Activated B cell treated with CpG ODN at 0.5 μM for 24 hours (primary cell): ENCODE measurements at regions of chr5 and their contacts with region 1.

Region 1: DNA sequence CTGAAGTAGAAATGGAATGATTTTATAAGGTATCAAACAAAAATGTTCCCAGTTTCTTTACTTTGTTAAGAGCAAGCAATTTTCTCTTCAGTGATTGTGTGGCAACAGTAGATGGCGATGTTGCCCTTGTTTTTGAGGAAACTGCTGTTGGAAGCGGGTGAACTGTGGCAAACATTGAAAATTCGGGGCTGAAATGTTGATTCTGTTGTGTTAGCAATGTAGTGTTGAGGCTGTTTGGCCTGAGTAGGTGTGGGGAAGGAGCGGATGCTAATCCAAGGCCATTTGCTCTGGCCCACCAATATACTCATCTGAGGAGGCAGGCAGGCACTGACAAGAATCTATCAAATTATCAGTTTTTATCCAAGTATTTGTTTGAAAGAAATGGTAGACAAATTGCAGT is 129.8 kb downstream of the SLC12A2 start:
- DNase-seq: no peak
- ATAC-seq: no peak
- H3K4me3 Mint-ChIP-seq: no peak overlapping the region
- H3K27ac Mint-ChIP-seq: no peak overlapping the region
- H3K4me1 Mint-ChIP-seq: no peaks in the 10 kb centered on the region
- H3K27me3 Mint-ChIP-seq: no peaks in the 10 kb centered on the region
- CTCF ChIP-seq: no peak

Region 2: DNA sequence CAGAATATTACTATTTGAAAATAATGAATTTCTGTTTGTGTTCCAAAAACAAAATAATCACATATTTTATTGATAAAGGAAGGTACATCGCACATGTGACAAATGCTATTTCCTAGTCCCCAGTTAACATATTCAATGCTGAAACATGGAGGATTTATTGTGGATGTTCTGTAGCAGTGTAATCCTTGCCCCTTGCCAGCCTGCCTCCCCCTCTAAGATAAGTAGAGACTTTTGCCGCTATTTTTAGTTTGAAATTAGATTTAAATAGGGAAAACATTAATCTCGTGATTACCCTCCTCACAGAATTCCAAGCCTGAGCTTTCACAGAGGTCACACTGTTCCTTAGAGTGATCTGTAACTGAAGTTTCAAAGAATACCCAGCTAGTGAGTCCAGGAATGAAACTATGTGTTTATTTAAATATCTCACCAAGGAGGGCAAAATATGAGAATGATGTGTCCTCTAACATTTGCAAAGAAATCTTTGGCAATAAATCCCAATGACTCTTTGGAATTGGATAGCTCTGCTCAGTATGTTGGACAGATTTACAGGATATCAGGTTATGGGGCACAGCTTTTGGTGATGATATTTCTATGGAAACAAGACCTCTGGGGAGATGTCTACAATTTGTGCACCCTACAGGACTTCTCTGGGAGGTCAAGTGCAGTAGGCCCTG is 547.2 kb before region 1 on chr5:
- CTCF ChIA-PET with region 1: no interaction called
- POLR2A ChIA-PET with region 1: no interaction called
- intact Hi-C with region 1: no loop called
- DNase-seq: no peak
- ATAC-seq: no peak
- H3K4me3 Mint-ChIP-seq: no peak overlapping the region
- H3K27ac Mint-ChIP-seq: no peak overlapping the region
- H3K4me1 Mint-ChIP-seq: no peaks in the 10 kb centered on the region
- H3K27me3 Mint-ChIP-seq: no peaks in the 10 kb centered on the region
- CTCF ChIP-seq: no peak

Region 3: DNA sequence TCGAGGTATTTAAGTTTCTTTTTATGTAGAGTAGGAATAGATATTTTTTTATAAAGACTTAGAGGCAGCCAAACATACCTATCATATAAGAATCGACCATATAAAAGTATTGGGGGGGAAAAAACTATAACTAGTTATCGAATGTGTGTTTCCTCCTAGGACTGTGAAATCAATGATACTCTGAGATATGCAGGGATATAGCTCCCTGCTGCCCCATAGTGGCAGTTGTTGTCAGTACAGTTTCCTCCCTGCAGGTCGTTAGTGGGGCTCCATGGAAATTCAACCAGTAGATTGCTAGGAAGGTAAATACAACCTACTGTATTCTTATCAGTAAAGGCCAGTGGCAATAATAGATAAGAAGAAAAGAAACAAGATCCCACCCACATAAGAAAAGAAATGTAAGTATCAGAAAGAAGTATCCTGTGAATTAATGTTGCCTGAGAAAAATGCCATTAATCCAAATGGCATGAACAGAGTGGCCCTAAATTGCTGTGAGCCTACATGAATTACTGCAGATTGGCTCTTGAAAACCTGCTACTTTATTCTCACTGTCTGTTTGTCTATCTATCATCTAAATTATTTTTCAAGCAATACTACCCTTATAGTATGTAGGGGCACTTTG is 461.6 kb after region 1 on chr5:
- CTCF ChIA-PET with region 1: no interaction called
- POLR2A ChIA-PET with region 1: no interaction called
- intact Hi-C with region 1: loop called (anchors 2 kb)
- DNase-seq: no peak
- ATAC-seq: peak; percentile 34
- H3K4me3 Mint-ChIP-seq: no peak overlapping the region
- H3K27ac Mint-ChIP-seq: no peak overlapping the region
- H3K4me1 Mint-ChIP-seq: no peaks in the 10 kb centered on the region
- H3K27me3 Mint-ChIP-seq: no peaks in the 10 kb centered on the region
- CTCF ChIP-seq: no peak

Region 4: GRCh38 chr5:129852747-129853352 is 1639.5 kb after region 1 on chr5:
- CTCF ChIA-PET with region 1: no interaction called
- POLR2A ChIA-PET with region 1: no interaction called
- intact Hi-C with region 1: loop called (anchors 2 kb)
- DNase-seq: peak; percentile 28
- ATAC-seq: peak; percentile 61
- H3K4me3 Mint-ChIP-seq: no peak overlapping the region
- H3K27ac Mint-ChIP-seq: no peak overlapping the region
- H3K4me1 Mint-ChIP-seq: no peaks in the 10 kb centered on the region
- H3K27me3 Mint-ChIP-seq: peaks cover 4% of the 10 kb centered on the region
- CTCF ChIP-seq: peak; percentile 51